Heart right ventricle (tissue), 16 donors: ENCODE measurements at regions of chr3 and their contacts with region 1.

Region 1: GRCh38 chr3:32126305-32127015 is 20.0 kb downstream of the GPD1L start:
- DNase-seq: peak; percentile 29 to 33
- ATAC-seq: peak in 7 of 8 donors; percentile 59 to 94 (median 85)
- H3K4me3 ChIP-seq: no peak overlapping the region
- H3K27ac ChIP-seq: peak overlapping the region in 9 of 10 donors; percentile 4 to 72 (median 45)
- H3K4me1 ChIP-seq: peaks cover 3 to 44% (median 24%) of the 10 kb centered on the region in 9 donors
- H3K27me3 ChIP-seq: no peaks in the 10 kb centered on the region
- CTCF ChIP-seq: no peak

Region 2: DNA sequence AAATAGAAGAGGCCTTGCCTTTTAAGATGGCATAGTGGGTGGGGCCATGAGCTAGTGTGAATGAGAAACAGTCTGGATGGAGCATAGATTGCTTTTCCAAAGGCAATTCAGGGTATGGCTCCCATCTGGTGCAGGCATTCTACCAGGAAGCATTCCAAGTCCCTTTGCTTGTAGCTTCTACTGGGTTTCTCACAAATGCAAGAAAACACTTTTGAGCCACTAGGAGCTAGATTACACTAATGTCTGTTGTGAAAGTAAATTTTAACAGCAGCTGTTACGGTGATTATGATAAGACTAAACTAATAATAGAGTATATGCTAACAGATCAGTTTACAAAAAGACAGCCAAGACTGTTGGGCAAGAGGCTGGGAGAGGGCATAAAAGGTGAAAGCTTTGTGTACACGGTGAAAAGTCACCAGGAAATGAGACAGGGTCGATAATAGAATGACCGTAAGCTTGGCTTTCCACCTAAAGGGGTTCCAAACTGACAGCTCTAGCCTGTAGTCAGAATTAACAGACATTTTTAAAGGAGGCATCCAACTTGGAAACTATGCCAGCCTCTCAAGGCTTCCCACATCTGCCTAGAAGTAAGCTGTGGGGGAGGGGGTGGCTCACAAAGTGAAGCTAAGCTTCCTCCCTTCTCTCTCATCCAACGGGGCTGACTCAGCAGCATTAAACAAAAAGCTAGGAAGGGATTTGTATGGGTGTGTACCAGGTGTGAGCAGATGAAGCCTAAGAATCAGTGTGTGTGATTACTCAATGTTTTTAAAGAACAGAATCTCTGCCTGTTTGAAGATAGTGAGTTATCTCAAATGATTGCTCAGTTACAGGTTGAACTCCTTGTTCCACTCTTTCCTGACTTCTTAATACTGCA is 81.1 kb before region 1 on chr3:
- intact Hi-C with region 1: loop called in 1 of 10 experiments (anchors 5 kb)
- DNase-seq: peak in 1 of 2 donors; percentile 20
- ATAC-seq: peak; percentile 75 to 95 (median 83)
- H3K4me3 ChIP-seq: peak overlapping the region in 4 of 10 donors; percentile 15 to 22 (median 20)
- H3K27ac ChIP-seq: peak overlapping the region; percentile 30 to 80 (median 70)
- H3K4me1 ChIP-seq: peaks cover 0 to 21% (median 16%) of the 10 kb centered on the region in 9 donors
- H3K27me3 ChIP-seq: no peaks in the 10 kb centered on the region
- CTCF ChIP-seq: no peak

Region 3: GRCh38 chr3:32106280-32106928 is 20.1 kb before region 1 on chr3 and contains the start of gene GPD1L:
- intact Hi-C with region 1: loop called in 2 of 10 experiments (anchors 1 kb)
- DNase-seq: peak; percentile 93 to 97
- ATAC-seq: peak; percentile 95 to 99 (median 97)
- H3K4me3 ChIP-seq: peak within 1 kb of the TSS; percentile 73 to 95 (median 92)
- H3K27ac ChIP-seq: peak within 1 kb of the TSS; percentile 74 to 92 (median 88)
- H3K4me1 ChIP-seq: peaks cover 0 to 51% (median 45%) of the 10 kb centered on the region in 9 donors
- H3K27me3 ChIP-seq: no peaks in the 10 kb centered on the region
- CTCF ChIP-seq: no peak
- total RNA-seq, gene GPD1L: 120 to 349 (median 186) TPM

Region 4: DNA sequence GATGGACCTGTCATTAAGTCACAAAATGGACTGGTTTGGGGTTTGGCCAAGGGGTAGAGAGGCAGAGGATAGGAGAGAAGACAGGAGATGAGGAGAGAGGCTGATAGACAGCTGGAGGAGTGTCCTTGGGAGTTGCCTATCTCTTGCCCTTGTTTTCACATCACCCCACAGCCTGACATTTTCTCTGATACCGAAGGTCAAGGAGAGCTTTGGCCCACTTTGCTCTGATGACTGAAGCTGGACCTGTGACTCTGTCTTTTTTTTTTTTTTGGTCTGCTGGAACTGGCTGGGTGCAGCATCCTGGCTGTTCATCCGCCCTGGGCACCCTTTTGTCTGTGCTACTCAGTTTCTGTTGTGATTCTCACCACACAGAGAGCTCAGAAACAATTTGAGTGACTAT is 14.9 kb before region 1 on chr3:
- intact Hi-C with region 1: loop called in 2 of 10 experiments (anchors 1 kb)
- DNase-seq: no peak
- ATAC-seq: peak in 4 of 8 donors; percentile 11 to 53 (median 40)
- H3K4me3 ChIP-seq: no peak overlapping the region
- H3K27ac ChIP-seq: peak overlapping the region in 9 of 10 donors; percentile 46 to 90 (median 68)
- H3K4me1 ChIP-seq: peaks cover 0 to 64% (median 48%) of the 10 kb centered on the region in 9 donors
- H3K27me3 ChIP-seq: no peaks in the 10 kb centered on the region
- CTCF ChIP-seq: no peak